ENCODE measurements at regions of chr2 and their contacts with region 1.

Region 1: DNA sequence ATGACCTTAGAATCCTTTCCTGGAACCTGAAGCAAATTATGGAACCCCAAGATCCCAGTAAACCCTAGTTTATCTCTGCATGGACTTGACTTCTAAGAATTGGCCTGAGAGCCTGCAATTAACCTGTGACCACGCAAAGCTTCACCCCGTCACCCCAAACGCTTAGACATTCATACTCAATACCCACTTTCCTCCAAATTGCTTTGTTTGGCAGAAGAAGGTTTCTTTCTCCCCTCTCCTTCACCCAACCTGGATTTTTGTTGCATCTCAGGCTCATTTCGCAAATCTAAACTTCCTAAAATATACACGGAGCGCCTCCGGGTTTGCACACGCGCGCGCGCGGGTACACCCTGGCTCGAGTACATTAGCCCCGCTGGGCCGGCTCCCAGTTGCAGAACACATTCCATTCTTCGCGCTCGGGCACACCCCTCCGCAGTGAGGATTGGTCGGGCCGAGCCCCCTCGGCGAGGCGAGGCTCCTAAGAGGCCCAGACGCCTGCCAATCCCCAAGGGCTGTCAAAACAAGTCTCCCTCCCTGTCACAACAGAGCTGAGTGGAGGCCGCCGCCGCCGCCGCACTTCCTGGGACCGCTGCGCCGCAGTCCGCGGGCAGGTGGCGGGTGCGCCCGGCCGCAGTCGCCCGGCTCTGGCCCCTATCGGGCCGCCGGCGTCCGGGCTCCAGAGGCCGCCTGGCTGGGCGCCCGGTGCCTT is at the start of gene PLCL1:
- DNase-seq: peak; percentile 93
- CTCF ChIP-seq: no peak

Region 2: DNA sequence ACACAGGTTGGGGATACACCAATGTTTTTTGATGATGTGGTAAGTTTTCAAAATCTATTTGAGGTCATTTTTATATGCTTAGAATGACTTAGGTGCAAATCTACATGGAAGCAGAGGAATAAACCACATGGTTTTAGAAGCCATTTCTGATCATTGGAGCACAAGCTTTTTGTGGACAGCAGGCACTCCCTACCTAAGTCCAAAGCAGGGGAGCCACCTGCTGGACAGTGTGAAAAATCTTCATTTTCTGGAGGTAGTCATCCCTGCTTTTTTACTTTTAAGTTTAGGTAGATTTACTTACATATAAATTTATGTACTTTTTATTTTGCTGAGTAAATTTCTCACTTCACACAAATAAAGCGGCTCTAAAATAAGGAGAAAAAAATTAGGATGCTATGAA is 323.4 kb after region 1 on chr2:
- in situ Hi-C with region 1: loop called (anchors 10 kb)
- DNase-seq: peak; percentile 9
- CTCF ChIP-seq: peak; percentile 75

Region 3: DNA sequence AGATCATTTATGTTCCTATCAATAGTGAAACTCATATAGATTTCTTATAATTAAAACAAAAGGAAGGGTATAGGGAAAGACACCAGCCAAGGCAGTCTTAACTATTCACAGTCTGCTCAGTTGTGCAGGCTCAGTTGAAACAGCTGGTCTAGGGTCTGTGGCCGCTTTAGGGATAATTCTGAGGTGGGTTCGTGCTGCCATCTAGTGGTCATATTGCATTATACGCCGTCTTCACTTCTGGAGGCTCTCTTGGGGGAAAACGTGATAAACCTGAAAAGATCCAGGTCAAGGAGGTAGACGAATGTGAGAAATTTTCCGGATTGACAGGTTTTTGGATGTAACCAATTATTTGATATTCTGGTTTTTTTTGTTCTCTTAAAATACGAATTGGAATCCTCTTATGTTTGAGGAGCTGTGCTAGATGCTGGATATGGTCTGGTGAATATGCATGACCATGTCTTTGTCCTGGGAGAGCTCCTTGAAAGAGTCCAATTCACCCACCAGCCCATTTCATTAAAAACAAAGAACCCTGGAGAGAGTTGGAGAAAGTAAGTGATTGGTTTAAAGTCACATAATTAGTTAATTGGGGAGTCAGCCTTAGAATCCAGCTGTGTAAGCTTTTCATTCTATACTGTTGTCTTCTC is 492.6 kb after region 1 on chr2:
- in situ Hi-C with region 1: loop called (anchors 25 kb)
- DNase-seq: peak; percentile 51
- CTCF ChIP-seq: peak; percentile 66